ENCODE measurements at regions of chr18 and their contacts with region 1.

Region 1: GRCh38 chr18:70072678-70073077 is 125.0 kb upstream of the CD226 start:
- DNase-seq: peak; percentile 33
- ATAC-seq: peak; percentile 66
- H3K4me3 ChIP-seq: no peak overlapping the region
- H3K27ac ChIP-seq: no peak overlapping the region
- H3K4me1 ChIP-seq: no peaks in the 10 kb centered on the region
- H3K27me3 ChIP-seq: no peaks in the 10 kb centered on the region
- CTCF ChIP-seq: peak; percentile 44

Region 2: GRCh38 chr18:68847219-68847837 is 1225.3 kb before region 1 on chr18:
- CTCF ChIA-PET with region 1: no interaction called
- POLR2A ChIA-PET with region 1: no interaction called
- intact Hi-C with region 1: loop called (anchors 5 kb)
- DNase-seq: peak; percentile 44
- ATAC-seq: no peak
- H3K4me3 ChIP-seq: no peak overlapping the region
- H3K27ac ChIP-seq: no peak overlapping the region
- H3K4me1 ChIP-seq: no peaks in the 10 kb centered on the region
- H3K27me3 ChIP-seq: no peaks in the 10 kb centered on the region
- CTCF ChIP-seq: peak; percentile 80

Region 3: GRCh38 chr18:68925268-68925667 is 1147.4 kb before region 1 on chr18:
- CTCF ChIA-PET with region 1: no interaction called
- POLR2A ChIA-PET with region 1: no interaction called
- intact Hi-C with region 1: loop called (anchors 5 kb)
- DNase-seq: peak; percentile 9
- ATAC-seq: peak; percentile 58
- H3K4me3 ChIP-seq: no peak overlapping the region
- H3K27ac ChIP-seq: no peak overlapping the region
- H3K4me1 ChIP-seq: no peaks in the 10 kb centered on the region
- H3K27me3 ChIP-seq: no peaks in the 10 kb centered on the region
- CTCF ChIP-seq: peak; percentile 52

Region 4: DNA sequence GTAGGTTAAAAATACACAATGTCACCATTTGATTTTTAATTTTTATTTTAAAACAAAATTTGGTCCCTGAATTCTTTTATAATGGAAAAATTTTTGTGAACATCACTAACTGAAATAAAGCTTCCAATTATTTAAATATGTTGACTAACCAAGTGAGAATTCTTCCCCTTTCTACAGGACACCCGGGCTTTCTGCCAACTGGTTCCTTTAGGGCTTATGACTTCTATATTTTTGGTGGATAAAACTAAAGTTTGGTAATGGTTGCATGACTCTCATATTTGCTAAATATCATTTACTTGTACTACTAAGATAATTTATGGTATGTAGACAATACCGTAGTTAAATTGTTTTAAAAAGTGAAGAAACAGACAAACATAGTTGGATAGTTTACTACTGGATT is 963.0 kb before region 1 on chr18:
- CTCF ChIA-PET with region 1: no interaction called
- POLR2A ChIA-PET with region 1: no interaction called
- intact Hi-C with region 1: loop called (anchors 10 kb)
- DNase-seq: no peak
- ATAC-seq: no peak
- H3K4me3 ChIP-seq: no peak overlapping the region
- H3K27ac ChIP-seq: no peak overlapping the region
- H3K4me1 ChIP-seq: no peaks in the 10 kb centered on the region
- H3K27me3 ChIP-seq: no peaks in the 10 kb centered on the region
- CTCF ChIP-seq: no peak

Region 5: GRCh38 chr18:69469444-69469919 is 603.2 kb before region 1 on chr18:
- CTCF ChIA-PET with region 1: no interaction called
- POLR2A ChIA-PET with region 1: no interaction called
- intact Hi-C with region 1: loop called (anchors 5 kb)
- DNase-seq: peak; percentile 78
- ATAC-seq: peak; percentile 94
- H3K4me3 ChIP-seq: peak overlapping the region; percentile 59
- H3K27ac ChIP-seq: no peak overlapping the region
- H3K4me1 ChIP-seq: no peaks in the 10 kb centered on the region
- H3K27me3 ChIP-seq: no peaks in the 10 kb centered on the region
- CTCF ChIP-seq: peak; percentile 79

Region 6: DNA sequence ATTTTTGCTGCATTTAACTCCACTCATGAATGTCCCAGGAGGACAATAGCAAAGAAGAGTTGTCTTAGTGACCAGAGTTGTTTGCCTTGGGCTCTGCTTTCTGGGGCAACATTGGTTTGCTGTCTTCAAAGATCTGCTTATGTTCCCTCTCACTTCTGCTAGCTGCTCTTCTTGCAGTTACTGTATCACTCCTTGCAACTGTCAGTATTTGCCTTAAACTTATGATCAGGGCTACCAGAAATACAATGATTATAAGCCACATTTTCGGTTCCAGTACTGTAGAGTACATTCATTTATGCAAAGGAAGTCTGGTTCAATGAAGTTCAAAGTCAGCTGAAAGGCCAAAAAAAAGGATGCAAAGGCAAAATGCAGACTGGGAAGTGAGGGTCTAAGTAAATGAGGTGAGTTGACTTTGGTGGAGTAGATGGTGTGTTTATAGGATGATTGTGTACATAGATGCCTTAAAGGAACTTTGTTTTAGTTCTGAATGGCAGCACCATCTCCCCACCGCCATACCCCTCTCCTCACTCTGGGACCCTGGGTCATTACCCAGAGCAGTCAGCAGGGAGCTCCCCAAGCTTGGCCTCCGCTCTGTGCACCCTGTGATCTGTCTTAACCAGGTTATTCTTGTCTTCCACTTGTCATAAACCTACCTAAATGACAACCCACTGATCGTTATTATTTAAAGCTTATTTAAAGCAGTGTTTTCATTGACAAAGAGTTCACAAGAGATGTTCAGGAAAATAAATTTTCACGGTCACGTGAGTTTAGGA is 436.0 kb before region 1 on chr18:
- CTCF ChIA-PET with region 1: no interaction called
- POLR2A ChIA-PET with region 1: no interaction called
- intact Hi-C with region 1: loop called (anchors 2 kb)
- DNase-seq: no peak
- ATAC-seq: peak; percentile 54; the same call in 1 of the 2 replicates
- H3K4me3 ChIP-seq: no peak overlapping the region
- H3K27ac ChIP-seq: no peak overlapping the region
- H3K4me1 ChIP-seq: no peaks in the 10 kb centered on the region
- H3K27me3 ChIP-seq: peaks cover 3% of the 10 kb centered on the region; the same call in 1 of the 2 replicates
- CTCF ChIP-seq: peak; percentile 52

Region 7: GRCh38 chr18:70523035-70523791 is 450.5 kb after region 1 on chr18:
- CTCF ChIA-PET with region 1: no interaction called
- POLR2A ChIA-PET with region 1: no interaction called
- intact Hi-C with region 1: no loop called
- DNase-seq: peak; percentile 56
- ATAC-seq: peak; percentile 99
- H3K4me3 ChIP-seq: no peak overlapping the region
- H3K27ac ChIP-seq: no peak overlapping the region
- H3K4me1 ChIP-seq: peaks cover 13% of the 10 kb centered on the region; the same call in 1 of the 2 replicates
- H3K27me3 ChIP-seq: peaks cover 36% of the 10 kb centered on the region; the same call in 1 of the 2 replicates
- CTCF ChIP-seq: no peak

Measured in PC-3 (cell line).